IMR-90 (cell line): ENCODE measurements at regions of chr3 and their contacts with region 1.

Region 1: GRCh38 chr3:15108082-15108545 is 9.2 kb upstream of the RBSN start:
- DNase-seq: peak; percentile 69
- ATAC-seq: peak; percentile 98
- H3K4me3 ChIP-seq: no peak overlapping the region
- H3K27ac ChIP-seq: no peak overlapping the region
- H3K4me1 ChIP-seq: no peaks in the 10 kb centered on the region
- H3K27me3 ChIP-seq: peaks cover 20% of the 10 kb centered on the region
- CTCF ChIP-seq: peak; percentile 72
- POLR2A ChIP-seq: no peak
- RAD21 ChIP-seq: peak; percentile 68

Region 2: DNA sequence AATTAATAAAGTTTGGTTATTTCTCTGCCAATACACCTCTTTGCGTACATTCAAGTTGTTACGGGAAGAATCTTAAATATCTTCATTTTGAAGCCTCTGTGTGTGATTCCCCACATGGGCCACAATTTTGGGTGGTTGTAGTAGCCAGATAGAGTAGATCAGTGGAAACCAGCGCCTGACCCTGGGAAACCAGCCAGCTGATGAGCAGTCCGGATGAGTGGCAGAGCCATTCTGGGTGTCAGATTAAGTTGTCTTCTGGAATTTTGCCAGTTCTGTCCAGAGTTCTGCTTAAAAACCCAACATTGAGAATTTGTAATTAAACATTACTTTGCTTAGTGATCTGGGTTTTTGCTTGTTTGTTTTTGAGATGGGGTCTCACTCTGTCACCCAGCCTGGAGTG is 92.7 kb before region 1 on chr3:
- CTCF ChIA-PET with region 1: no interaction called
- POLR2A ChIA-PET with region 1: no interaction called
- dilution Hi-C with region 1: no loop called
- in situ Hi-C with region 1: no loop called
- intact Hi-C with region 1: no loop called
- DNase-seq: peak; percentile 3
- ATAC-seq: no peak
- H3K4me3 ChIP-seq: no peak overlapping the region
- H3K27ac ChIP-seq: no peak overlapping the region
- H3K4me1 ChIP-seq: no peaks in the 10 kb centered on the region
- H3K27me3 ChIP-seq: no peaks in the 10 kb centered on the region
- CTCF ChIP-seq: no peak
- POLR2A ChIP-seq: no peak
- RAD21 ChIP-seq: no peak

Region 3: GRCh38 chr3:15377961-15378791 is 270.1 kb after region 1 on chr3:
- CTCF ChIA-PET with region 1: no interaction called
- POLR2A ChIA-PET with region 1: no interaction called
- dilution Hi-C with region 1: no loop called
- in situ Hi-C with region 1: loop called (anchors 25 kb)
- intact Hi-C with region 1: no loop called
- DNase-seq: peak; percentile 93
- ATAC-seq: peak; percentile 100
- H3K4me3 ChIP-seq: no peak overlapping the region
- H3K27ac ChIP-seq: no peak overlapping the region
- H3K4me1 ChIP-seq: no peaks in the 10 kb centered on the region
- H3K27me3 ChIP-seq: no peaks in the 10 kb centered on the region
- CTCF ChIP-seq: peak; percentile 95
- POLR2A ChIP-seq: 0 out of 2 replicates have a peak, but pooled peaks have one; percentile 30
- RAD21 ChIP-seq: peak; percentile 93

Region 4: GRCh38 chr3:15405448-15406050 is 297.4 kb after region 1 on chr3:
- CTCF ChIA-PET with region 1: interaction called, 3 read pairs
- POLR2A ChIA-PET with region 1: no interaction called
- dilution Hi-C with region 1: no loop called
- in situ Hi-C with region 1: no loop called
- intact Hi-C with region 1: loop called (anchors 10 kb)
- DNase-seq: peak; percentile 71
- ATAC-seq: peak; percentile 77
- H3K4me3 ChIP-seq: no peak overlapping the region
- H3K27ac ChIP-seq: no peak overlapping the region
- H3K4me1 ChIP-seq: no peaks in the 10 kb centered on the region
- H3K27me3 ChIP-seq: no peaks in the 10 kb centered on the region
- CTCF ChIP-seq: peak; percentile 65
- POLR2A ChIP-seq: no peak
- RAD21 ChIP-seq: peak; percentile 68

Region 5: DNA sequence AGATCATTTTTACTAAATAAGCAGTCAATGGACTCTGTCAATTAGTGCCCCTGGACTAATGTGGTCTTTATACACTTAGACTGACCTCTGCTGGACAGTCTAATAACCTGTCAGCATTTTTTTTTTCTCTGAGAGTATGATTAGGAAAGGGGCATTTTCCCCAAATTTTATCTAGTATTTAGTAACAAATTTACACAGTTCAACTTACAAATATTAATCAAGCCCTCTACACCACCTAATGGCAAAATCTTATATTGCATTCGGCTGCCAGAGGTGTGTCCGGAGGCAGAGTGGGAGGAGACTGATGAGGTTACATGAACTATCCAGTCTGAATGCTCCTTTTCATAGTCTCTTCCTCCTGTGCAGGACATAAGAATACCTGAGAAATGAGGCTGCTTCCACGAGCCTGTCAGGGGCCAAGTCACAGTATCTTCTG is 449.4 kb after region 1 on chr3:
- CTCF ChIA-PET with region 1: interaction called, 6 read pairs
- POLR2A ChIA-PET with region 1: no interaction called
- dilution Hi-C with region 1: no loop called
- in situ Hi-C with region 1: no loop called
- intact Hi-C with region 1: loop called (anchors 5 kb)
- DNase-seq: peak; percentile 75
- ATAC-seq: peak; percentile 99
- H3K4me3 ChIP-seq: no peak overlapping the region
- H3K27ac ChIP-seq: no peak overlapping the region
- H3K4me1 ChIP-seq: no peaks in the 10 kb centered on the region
- H3K27me3 ChIP-seq: no peaks in the 10 kb centered on the region
- CTCF ChIP-seq: peak; percentile 58
- POLR2A ChIP-seq: no peak
- RAD21 ChIP-seq: peak; percentile 52